Spleen (tissue), 13 donors: ENCODE measurements at regions of chr15 and their contacts with region 1.

Region 1: GRCh38 chr15:39874890-39875549 is 45.0 kb downstream of the GPR176 start:
- DNase-seq: no peak
- H3K4me3 ChIP-seq: no peak overlapping the region
- H3K27ac ChIP-seq: no peak overlapping the region
- H3K4me1 ChIP-seq: no peaks in the 10 kb centered on the region
- H3K27me3 ChIP-seq: no peaks in the 10 kb centered on the region
- CTCF ChIP-seq: peak in 7 of 11 experiments; percentile 33 to 54 (median 44)
- POLR2A ChIP-seq: no peak

Region 2: GRCh38 chr15:39782441-39783138 is 92.4 kb before region 1 on chr15 and contains the start of gene FSIP1:
- intact Hi-C with region 1: loop called (anchors 10 kb)
- DNase-seq: peak; percentile 99
- H3K4me3 ChIP-seq: peak within 1 kb of the TSS; percentile 73 to 99 (median 98)
- H3K27ac ChIP-seq: peak within 1 kb of the TSS; percentile 56 to 91 (median 82)
- H3K4me1 ChIP-seq: peaks cover 6 to 51% (median 35%) of the 10 kb centered on the region in 6 donors
- H3K27me3 ChIP-seq: no peaks in the 10 kb centered on the region
- CTCF ChIP-seq: peak in 2 of 11 experiments; percentile 17 to 30
- POLR2A ChIP-seq: peak in 1 of 3 donors; percentile 24
- total RNA-seq, gene FSIP1: 0.28 to 2.3 (median 0.63) TPM

Region 3: GRCh38 chr15:39976291-39977274 is 101.6 kb after region 1 on chr15:
- intact Hi-C with region 1: no loop called
- DNase-seq: peak; percentile 76
- H3K4me3 ChIP-seq: peak overlapping the region; percentile 4 to 67 (median 32)
- H3K27ac ChIP-seq: peak overlapping the region in 7 of 8 donors; percentile 70 to 83 (median 77)
- H3K4me1 ChIP-seq: peaks cover 0 to 9% (median 0%) of the 10 kb centered on the region in 6 donors
- H3K27me3 ChIP-seq: no peaks in the 10 kb centered on the region
- CTCF ChIP-seq: peak in 5 of 11 experiments; percentile 17 to 68 (median 36)
- POLR2A ChIP-seq: no peak

Region 4: GRCh38 chr15:40044717-40045571 is 169.9 kb after region 1 on chr15:
- intact Hi-C with region 1: no loop called
- DNase-seq: peak; percentile 97
- H3K4me3 ChIP-seq: peak overlapping the region in 2 of 8 donors; percentile 4 to 29
- H3K27ac ChIP-seq: peak overlapping the region; percentile 10 to 88 (median 56)
- H3K4me1 ChIP-seq: peaks cover 37 to 72% (median 65%) of the 10 kb centered on the region in 6 donors
- H3K27me3 ChIP-seq: no peaks in the 10 kb centered on the region
- CTCF ChIP-seq: peak; percentile 81 to 96 (median 92)
- POLR2A ChIP-seq: no peak